CD4-positive, alpha-beta T cell (primary cell): ENCODE measurements at regions of chr9 and their contacts with region 1.

Region 1: GRCh38 chr9:128947422-128948301 is at the starts of genes DOLK and NUP188:
- DNase-seq: peak; percentile 95 to 100 (median 99)
- ATAC-seq: peak; percentile 87
- H3K4me3 ChIP-seq: peak within 1 kb of the TSS; percentile 99
- H3K4me3 Mint-ChIP-seq: peak within 1 kb of the TSS; percentile 99
- H3K27ac ChIP-seq: peak within 1 kb of the TSS; percentile 93 to 97
- H3K27ac Mint-ChIP-seq: peak within 1 kb of the TSS; percentile 89
- H3K4me1 ChIP-seq: peaks cover 24% of the 10 kb centered on the region
- H3K4me1 Mint-ChIP-seq: peaks cover 37% of the 10 kb centered on the region
- H3K27me3 ChIP-seq: no peaks in the 10 kb centered on the region
- H3K27me3 Mint-ChIP-seq: no peaks in the 10 kb centered on the region
- CTCF ChIP-seq: no peak
- total RNA-seq, gene DOLK: 7.4 to 7.8 TPM
- total RNA-seq, gene NUP188: 43.0 to 43.9 TPM

Region 2: GRCh38 chr9:127450830-127451724 is 1496.6 kb before region 1 on chr9 and contains the starts of genes LRSAM1 and RPL12:
- CTCF ChIA-PET with region 1: no interaction called
- POLR2A ChIA-PET with region 1: no interaction called
- intact Hi-C with region 1: no loop called
- DNase-seq: peak; percentile 97 to 100 (median 99)
- ATAC-seq: peak; percentile 84
- H3K4me3 ChIP-seq: peak within 1 kb of the TSS; percentile 89
- H3K4me3 Mint-ChIP-seq: peak within 1 kb of the TSS; percentile 99
- H3K27ac ChIP-seq: peak within 1 kb of the TSS; percentile 74 to 92
- H3K27ac Mint-ChIP-seq: peak within 1 kb of the TSS; percentile 99
- H3K4me1 ChIP-seq: peaks cover 41% of the 10 kb centered on the region
- H3K4me1 Mint-ChIP-seq: peaks cover 40% of the 10 kb centered on the region
- H3K27me3 ChIP-seq: no peaks in the 10 kb centered on the region
- H3K27me3 Mint-ChIP-seq: no peaks in the 10 kb centered on the region
- CTCF ChIP-seq: no peak
- total RNA-seq, gene LRSAM1: 11.4 to 16.0 TPM
- total RNA-seq, gene RPL12: 1,884 to 1,993 TPM

Region 3: DNA sequence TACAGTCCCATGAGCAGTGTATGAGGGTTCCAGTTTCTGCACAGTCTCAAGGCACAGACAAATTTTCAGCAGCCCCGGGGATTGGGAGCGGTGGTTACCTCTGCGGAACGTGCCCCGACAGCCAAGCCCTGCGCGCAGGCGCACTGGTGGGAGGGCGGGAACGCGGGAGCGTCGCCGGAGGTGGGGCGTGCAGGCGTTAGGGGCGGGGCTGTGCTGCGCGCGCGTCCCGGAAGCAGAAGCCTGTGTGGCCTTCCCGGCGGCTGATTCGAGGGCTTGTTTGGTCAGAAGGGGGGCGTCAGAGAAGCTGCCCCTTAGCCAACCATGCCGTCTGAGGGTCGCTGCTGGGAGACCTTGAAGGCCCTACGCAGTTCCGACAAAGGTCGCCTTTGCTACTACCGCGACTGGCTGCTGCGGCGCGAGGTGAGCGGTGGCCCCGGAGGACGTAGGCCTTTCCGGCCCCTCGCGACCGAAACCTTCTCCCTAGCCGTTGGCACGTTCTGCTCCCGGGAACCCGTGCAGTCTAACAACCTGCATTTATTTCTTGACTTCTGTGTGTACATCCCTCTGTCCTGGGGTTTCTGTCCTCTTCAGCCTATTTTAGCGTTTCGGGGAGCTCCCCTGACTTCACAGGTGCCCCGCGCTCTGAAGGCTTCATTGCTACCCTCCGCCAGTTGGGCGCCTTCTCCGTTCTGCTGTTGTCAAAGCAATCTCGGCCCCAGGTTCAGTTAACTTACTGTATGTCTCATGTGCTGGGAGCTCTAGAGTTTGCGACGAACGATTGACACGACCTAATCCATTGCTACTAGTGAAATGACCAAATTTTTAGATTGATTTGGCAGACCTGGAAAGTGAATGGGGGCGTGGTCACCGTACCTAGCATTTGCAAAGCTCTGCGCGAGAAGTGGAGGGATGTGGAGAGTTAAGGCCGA is 442.9 kb before region 1 on chr9 and contains the start of gene GLE1:
- CTCF ChIA-PET with region 1: no interaction called
- POLR2A ChIA-PET with region 1: no interaction called
- intact Hi-C with region 1: loop called in 1 of 2 experiments (anchors 5 kb)
- DNase-seq: peak; percentile 93 to 99 (median 97)
- ATAC-seq: peak; percentile 94
- H3K4me3 ChIP-seq: peak within 1 kb of the TSS; percentile 99
- H3K4me3 Mint-ChIP-seq: peak within 1 kb of the TSS; percentile 100
- H3K27ac ChIP-seq: peak within 1 kb of the TSS; percentile 80 to 92
- H3K27ac Mint-ChIP-seq: peak within 1 kb of the TSS; percentile 97
- H3K4me1 ChIP-seq: peaks cover 27% of the 10 kb centered on the region
- H3K4me1 Mint-ChIP-seq: peaks cover 41% of the 10 kb centered on the region
- H3K27me3 ChIP-seq: no peaks in the 10 kb centered on the region
- H3K27me3 Mint-ChIP-seq: no peaks in the 10 kb centered on the region
- CTCF ChIP-seq: no peak
- total RNA-seq, gene GLE1: 8.0 to 8.4 TPM

Region 4: DNA sequence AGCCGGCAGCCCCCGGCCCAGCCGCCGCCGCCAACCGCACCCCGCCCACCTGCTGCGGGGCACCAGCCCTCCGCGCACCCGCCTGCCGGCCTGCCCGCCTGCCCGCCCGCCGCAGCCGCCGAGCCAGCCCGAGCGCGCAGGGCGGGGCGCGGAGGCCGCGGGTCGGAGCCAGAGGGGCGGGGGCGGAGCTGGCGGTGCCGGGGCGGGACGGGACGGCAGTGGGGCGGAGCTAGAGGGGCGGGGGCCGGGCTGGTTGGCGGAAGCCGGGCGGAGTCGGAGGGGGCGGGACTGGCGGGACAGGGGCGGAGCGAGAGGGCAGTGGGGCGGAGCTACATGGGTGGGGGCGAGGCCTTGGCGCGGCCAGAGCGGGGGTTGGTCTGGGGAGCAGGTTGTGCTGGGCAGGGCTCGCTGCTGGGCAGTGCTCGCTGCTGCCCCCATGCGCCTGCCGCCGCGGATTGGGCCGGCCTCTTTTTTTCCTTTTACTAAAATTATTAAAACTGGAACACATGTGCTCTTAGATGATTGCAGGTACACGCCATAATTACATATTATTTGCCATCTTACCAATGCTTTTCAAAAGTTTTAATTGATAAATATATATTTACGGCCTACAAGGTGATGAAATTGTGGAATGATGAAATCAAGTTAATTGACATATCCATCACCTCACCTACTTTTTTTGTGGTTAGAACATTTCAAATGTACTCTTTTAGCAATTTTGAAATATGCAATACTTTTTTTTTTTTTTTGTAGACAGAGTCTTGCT is 80.7 kb after region 1 on chr9 and contains the start of gene SH3GLB2:
- CTCF ChIA-PET with region 1: no interaction called
- POLR2A ChIA-PET with region 1: no interaction called
- intact Hi-C with region 1: loop called in 1 of 2 experiments (anchors 2 kb)
- DNase-seq: peak; percentile 88 to 98 (median 92)
- ATAC-seq: peak; percentile 84
- H3K4me3 ChIP-seq: peak within 1 kb of the TSS; percentile 78
- H3K4me3 Mint-ChIP-seq: peak within 1 kb of the TSS; percentile 87
- H3K27ac ChIP-seq: peak within 1 kb of the TSS; percentile 12 to 53
- H3K27ac Mint-ChIP-seq: peak within 1 kb of the TSS; percentile 81
- H3K4me1 ChIP-seq: peaks cover 34% of the 10 kb centered on the region
- H3K4me1 Mint-ChIP-seq: peaks cover 25% of the 10 kb centered on the region
- H3K27me3 ChIP-seq: no peaks in the 10 kb centered on the region
- H3K27me3 Mint-ChIP-seq: no peaks in the 10 kb centered on the region
- CTCF ChIP-seq: no peak
- total RNA-seq, gene SH3GLB2: 65.6 to 69.1 TPM

Region 5: GRCh38 chr9:129036241-129036922 is 88.7 kb after region 1 on chr9 and contains the start of gene MIGA2:
- CTCF ChIA-PET with region 1: no interaction called
- POLR2A ChIA-PET with region 1: no interaction called
- intact Hi-C with region 1: loop called in 1 of 2 experiments (anchors 1 kb)
- DNase-seq: peak; percentile 79 to 98 (median 90)
- ATAC-seq: peak; percentile 92
- H3K4me3 ChIP-seq: peak within 1 kb of the TSS; percentile 84
- H3K4me3 Mint-ChIP-seq: peak within 1 kb of the TSS; percentile 89
- H3K27ac ChIP-seq: peak within 1 kb of the TSS; percentile 13 to 46
- H3K27ac Mint-ChIP-seq: peak within 1 kb of the TSS; percentile 52
- H3K4me1 ChIP-seq: peaks cover 34% of the 10 kb centered on the region
- H3K4me1 Mint-ChIP-seq: peaks cover 35% of the 10 kb centered on the region
- H3K27me3 ChIP-seq: no peaks in the 10 kb centered on the region
- H3K27me3 Mint-ChIP-seq: no peaks in the 10 kb centered on the region
- CTCF ChIP-seq: no peak
- total RNA-seq, gene MIGA2: 53.2 to 56.9 TPM

Region 6: GRCh38 chr9:129110740-129111527 is 163.3 kb after region 1 on chr9 and contains the starts of genes CRAT and PTPA:
- CTCF ChIA-PET with region 1: no interaction called
- POLR2A ChIA-PET with region 1: no interaction called
- intact Hi-C with region 1: loop called in 1 of 2 experiments (anchors 1 kb)
- DNase-seq: peak; percentile 93 to 99 (median 96)
- ATAC-seq: peak; percentile 85
- H3K4me3 ChIP-seq: peak within 1 kb of the TSS; percentile 93
- H3K4me3 Mint-ChIP-seq: peak within 1 kb of the TSS; percentile 98
- H3K27ac ChIP-seq: peak within 1 kb of the TSS; percentile 70 to 92
- H3K27ac Mint-ChIP-seq: peak within 1 kb of the TSS; percentile 92
- H3K4me1 ChIP-seq: peaks cover 34% of the 10 kb centered on the region
- H3K4me1 Mint-ChIP-seq: peaks cover 36% of the 10 kb centered on the region
- H3K27me3 ChIP-seq: no peaks in the 10 kb centered on the region
- H3K27me3 Mint-ChIP-seq: no peaks in the 10 kb centered on the region
- CTCF ChIP-seq: no peak
- total RNA-seq, gene CRAT: 7.1 to 9.4 TPM
- total RNA-seq, gene PTPA: 21.6 to 23.3 TPM